ENCODE measurements at regions of chr5 and their contacts with region 1.

Region 1: DNA sequence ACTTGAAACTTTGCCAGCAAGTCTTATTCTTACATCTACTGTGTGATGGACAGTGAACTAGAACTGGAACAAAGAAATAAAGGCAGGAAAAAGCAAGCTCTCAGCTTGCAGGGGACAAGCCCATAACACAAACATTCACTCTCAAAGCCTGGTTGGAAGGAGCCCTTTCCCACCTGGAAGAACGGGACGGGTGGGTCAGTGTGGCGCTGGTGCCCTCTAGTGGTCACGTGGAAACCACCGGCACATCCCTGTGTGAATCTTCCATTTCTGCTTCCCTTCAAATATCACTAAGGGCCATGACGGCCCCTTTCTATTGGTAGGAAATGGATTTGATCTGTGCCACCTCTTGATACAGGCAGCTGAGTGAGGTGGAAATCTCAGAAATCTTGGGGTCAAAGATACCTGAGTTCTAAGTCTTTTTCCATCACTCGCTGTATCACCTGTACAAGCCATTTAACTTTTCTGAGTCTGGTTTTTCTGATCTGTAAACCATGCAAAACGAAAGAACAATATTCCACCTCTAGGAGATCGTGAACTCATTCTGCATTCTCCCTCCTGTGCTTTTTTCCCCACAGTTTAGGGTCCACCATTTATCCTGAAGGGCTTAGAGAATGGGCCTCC is 211.6 kb downstream of the MSX2 start:
- DNase-seq: peak in 4 of 5 donors; percentile 7 to 13 (median 11)
- H3K4me3 ChIP-seq: no peak overlapping the region
- H3K4me3 Mint-ChIP-seq: no peak overlapping the region
- H3K27ac ChIP-seq: no peak overlapping the region
- H3K27ac Mint-ChIP-seq: no peak overlapping the region
- H3K4me1 ChIP-seq: no peaks in the 10 kb centered on the region
- H3K4me1 Mint-ChIP-seq: peaks cover 0 to 7% (median 1%) of the 10 kb centered on the region in 4 donors
- H3K27me3 ChIP-seq: no peaks in the 10 kb centered on the region
- H3K27me3 Mint-ChIP-seq: peaks cover 12% of the 10 kb centered on the region in 2 donors

Region 2: GRCh38 chr5:173940269-173940668 is 995.7 kb before region 1 on chr5:
- CTCF ChIA-PET with region 1: no interaction called
- POLR2A ChIA-PET with region 1: no interaction called
- intact Hi-C with region 1: no loop called
- DNase-seq: no peak
- H3K4me3 ChIP-seq: no peak overlapping the region
- H3K4me3 Mint-ChIP-seq: no peak overlapping the region
- H3K27ac ChIP-seq: no peak overlapping the region
- H3K27ac Mint-ChIP-seq: peak overlapping the region in 1 of 7 donors; percentile 22
- H3K4me1 ChIP-seq: no peaks in the 10 kb centered on the region
- H3K4me1 Mint-ChIP-seq: peaks cover 0 to 5% (median 0%) of the 10 kb centered on the region in 4 donors
- H3K27me3 ChIP-seq: no peaks in the 10 kb centered on the region
- H3K27me3 Mint-ChIP-seq: no peaks in the 10 kb centered on the region

Region 3: GRCh38 chr5:174327317-174328236 is 608.4 kb before region 1 on chr5:
- CTCF ChIA-PET with region 1: no interaction called
- POLR2A ChIA-PET with region 1: no interaction called
- intact Hi-C with region 1: loop called (anchors 5 kb)
- DNase-seq: peak in 4 of 5 donors; percentile 15 to 33 (median 26)
- H3K4me3 ChIP-seq: no peak overlapping the region
- H3K4me3 Mint-ChIP-seq: no peak overlapping the region
- H3K27ac ChIP-seq: no peak overlapping the region
- H3K27ac Mint-ChIP-seq: no peak overlapping the region
- H3K4me1 ChIP-seq: no peaks in the 10 kb centered on the region
- H3K4me1 Mint-ChIP-seq: peaks cover 0 to 1% (median 0%) of the 10 kb centered on the region in 4 donors
- H3K27me3 ChIP-seq: no peaks in the 10 kb centered on the region
- H3K27me3 Mint-ChIP-seq: peaks cover 7 to 10% of the 10 kb centered on the region in 2 donors

Measured in CD4-positive, alpha-beta memory T cell (primary cell).